HepG2 (cell line): ENCODE measurements at regions of chr19 and their contacts with region 1.

Region 1: GRCh38 chr19:55132453-55133129 is 15.2 kb upstream of the PPP1R12C start:
- DNase-seq: no peak
- ATAC-seq: peak; percentile 91
- H3K4me3 ChIP-seq: peak overlapping the region in 2 of 3 experiments; percentile 28 to 46; a peak in 3 of 6 replicates
- H3K27ac ChIP-seq: no peak overlapping the region
- H3K4me1 ChIP-seq: no peaks in the 10 kb centered on the region
- H3K27me3 ChIP-seq: peaks cover 0 to 26% of the 10 kb centered on the region in 2 experiments; a peak in 1 of 5 replicates
- CTCF ChIP-seq: peak; percentile 73
- EP300 ChIP-seq: no peak
- POLR2A ChIP-seq: no peak
- RAD21 ChIP-seq: peak; percentile 35; the same call in 1 of the 2 replicates

Region 2: DNA sequence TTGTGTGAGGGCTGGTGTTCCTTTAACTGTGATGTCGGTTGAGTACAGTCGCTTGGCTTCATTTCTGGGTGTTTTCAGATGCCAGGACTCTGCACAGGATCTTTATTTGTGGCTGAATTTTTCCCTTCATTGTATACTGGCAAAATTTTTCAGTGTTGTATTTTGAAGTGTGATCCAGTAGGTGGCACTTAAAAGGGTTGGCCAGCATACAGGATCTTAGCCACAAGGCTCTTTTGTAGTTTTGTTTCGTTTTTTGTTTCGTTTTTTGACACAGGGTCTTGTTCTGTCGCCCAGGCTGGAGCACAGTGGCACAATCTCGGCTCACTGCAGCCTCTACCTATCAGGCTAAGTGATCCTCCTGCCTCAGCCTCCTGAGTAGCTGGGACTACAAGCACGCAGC is 249.8 kb before region 1 on chr19:
- CTCF ChIA-PET with region 1: interaction called, 3 read pairs
- POLR2A ChIA-PET with region 1: no interaction called
- in situ Hi-C with region 1: no loop called
- intact Hi-C with region 1: loop called (anchors 5 kb)
- DNase-seq: peak; percentile 12
- ATAC-seq: peak; percentile 53; the same call in 2 of the 3 replicates
- H3K4me3 ChIP-seq: no peak overlapping the region
- H3K27ac ChIP-seq: no peak overlapping the region
- H3K4me1 ChIP-seq: no peaks in the 10 kb centered on the region
- H3K27me3 ChIP-seq: peaks cover 4 to 8% of the 10 kb centered on the region in 2 experiments; a peak in 4 of 5 replicates
- CTCF ChIP-seq: no peak
- EP300 ChIP-seq: no peak
- POLR2A ChIP-seq: no peak
- RAD21 ChIP-seq: no peak

Region 3: GRCh38 chr19:55088543-55089341 is 43.8 kb before region 1 on chr19:
- CTCF ChIA-PET with region 1: interaction called, 9 read pairs
- POLR2A ChIA-PET with region 1: no interaction called
- in situ Hi-C with region 1: no loop called
- intact Hi-C with region 1: loop called (anchors 1 kb)
- DNase-seq: peak; percentile 59
- ATAC-seq: peak; percentile 63
- H3K4me3 ChIP-seq: no peak overlapping the region
- H3K27ac ChIP-seq: no peak overlapping the region
- H3K4me1 ChIP-seq: no peaks in the 10 kb centered on the region
- H3K27me3 ChIP-seq: no peaks in the 10 kb centered on the region
- CTCF ChIP-seq: peak; percentile 62
- EP300 ChIP-seq: no peak
- POLR2A ChIP-seq: no peak
- RAD21 ChIP-seq: no peak